BJ (cell line): ENCODE measurements at regions of chr5 and their contacts with region 1.

Region 1: DNA sequence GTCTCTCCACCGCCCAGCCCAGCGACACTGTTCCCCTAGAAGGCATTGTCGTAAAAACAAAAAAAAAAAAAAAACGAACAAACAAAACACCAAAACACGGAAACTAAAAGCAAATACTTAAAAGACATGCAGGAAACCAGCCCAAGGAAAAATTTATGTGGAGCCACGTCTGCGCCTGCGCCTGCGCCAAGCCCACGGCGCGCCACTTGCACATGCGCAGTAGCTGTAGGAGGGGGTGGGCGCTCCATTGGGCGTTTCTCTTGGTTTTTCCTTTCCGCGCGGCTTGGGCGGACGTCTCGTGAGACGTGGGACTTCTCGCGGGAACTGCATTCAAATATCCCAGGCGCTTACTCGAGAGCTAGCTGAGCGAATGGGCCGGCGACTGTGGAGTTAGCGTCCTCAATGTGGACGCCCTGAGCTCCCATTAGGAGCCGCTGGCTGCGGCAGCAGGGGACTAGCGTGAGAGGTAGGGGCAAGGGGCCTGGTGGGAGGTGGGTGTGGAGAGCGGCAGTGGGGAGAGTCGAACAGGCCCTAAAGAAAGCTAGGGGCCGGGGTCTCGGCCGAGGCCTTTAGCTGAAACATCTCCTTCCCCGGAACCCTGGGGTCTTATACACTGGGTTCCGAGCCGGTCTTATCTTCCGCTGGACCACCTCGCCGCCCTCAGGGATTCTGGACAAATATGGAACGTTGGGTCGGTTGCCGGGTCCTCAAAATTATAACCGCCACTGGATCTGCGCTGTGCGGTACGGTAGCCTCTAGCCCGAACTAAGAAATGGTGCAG is at the start of gene SPDL1:
- DNase-seq: peak; percentile 75
- H3K4me3 ChIP-seq: peak within 1 kb of the TSS; percentile 86
- H3K27me3 ChIP-seq: no peaks in the 10 kb centered on the region
- CTCF ChIP-seq: no peak
- polyA plus RNA-seq, gene SPDL1: 35.4 and 39.2 TPM in 2 replicates

Region 2: GRCh38 chr5:168796000-168796399 is 787.6 kb before region 1 on chr5:
- CTCF ChIA-PET with region 1: no interaction called
- POLR2A ChIA-PET with region 1: interaction called, 10 read pairs
- DNase-seq: no peak
- H3K4me3 ChIP-seq: no peak overlapping the region
- H3K27me3 ChIP-seq: no peaks in the 10 kb centered on the region
- CTCF ChIP-seq: no peak

Region 3: GRCh38 chr5:168947212-168947868 is 636.3 kb before region 1 on chr5:
- CTCF ChIA-PET with region 1: interaction called, 19 read pairs
- POLR2A ChIA-PET with region 1: no interaction called
- DNase-seq: no peak
- H3K4me3 ChIP-seq: no peak overlapping the region
- H3K27me3 ChIP-seq: no peaks in the 10 kb centered on the region
- CTCF ChIP-seq: peak; percentile 91

Region 4: DNA sequence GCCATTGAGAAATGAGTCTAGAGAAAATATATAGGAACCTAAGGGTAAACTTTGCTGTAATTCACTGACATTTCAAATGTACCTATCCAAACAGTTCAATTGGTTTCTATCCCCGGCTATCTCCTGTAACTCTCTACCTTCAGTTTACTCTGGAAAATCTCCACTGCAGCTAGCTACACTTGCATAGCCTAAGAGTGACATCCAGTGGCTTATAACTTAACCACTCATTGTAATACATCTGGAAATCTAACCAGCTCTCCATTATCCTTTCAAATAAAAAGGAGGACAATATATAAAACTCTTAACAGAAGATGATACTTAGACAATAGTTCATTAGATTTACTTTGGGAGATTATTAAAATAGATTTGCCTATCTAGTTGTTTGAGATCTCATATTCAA is 35.3 kb before region 1 on chr5:
- CTCF ChIA-PET with region 1: no interaction called
- POLR2A ChIA-PET with region 1: no interaction called
- DNase-seq: no peak
- H3K4me3 ChIP-seq: no peak overlapping the region
- H3K27me3 ChIP-seq: no peaks in the 10 kb centered on the region
- CTCF ChIP-seq: peak; percentile 48

Region 5: DNA sequence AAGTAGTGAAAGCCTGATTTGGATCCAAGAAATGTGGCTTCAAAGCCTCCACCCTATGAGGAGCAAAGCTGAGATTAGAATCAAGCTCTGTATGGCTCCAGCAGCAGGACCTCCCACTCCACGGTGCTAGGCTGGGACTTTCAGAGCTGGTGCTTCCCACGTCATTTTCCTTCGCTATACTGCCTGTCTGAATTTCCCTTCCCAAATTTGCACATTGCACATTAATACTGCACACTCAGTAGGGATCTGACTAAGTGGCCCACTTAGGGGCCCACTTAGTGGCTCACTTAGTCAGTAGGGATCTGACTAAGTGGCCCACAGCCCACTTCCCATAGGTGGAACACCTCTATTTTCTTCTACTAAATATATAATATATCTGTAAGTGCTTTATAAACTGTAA is 14.1 kb before region 1 on chr5:
- CTCF ChIA-PET with region 1: interaction called, 11 read pairs
- POLR2A ChIA-PET with region 1: no interaction called
- DNase-seq: no peak
- H3K4me3 ChIP-seq: no peak overlapping the region
- H3K27me3 ChIP-seq: peaks cover 3% of the 10 kb centered on the region
- CTCF ChIP-seq: no peak